Activated naive CD8-positive, alpha-beta T cell treated with anti-CD3 and anti-CD28 coated beads, Interleukin-2, amount 10 ng/mL, durations not matched to agents 7 days and 5 days (primary cell): ENCODE measurements at regions of chr1 and their contacts with region 1.

Region 1: GRCh38 chr1:217630711-217631591 is at the starts of genes GPATCH2 and SPATA17:
- DNase-seq: peak; percentile 74
- ATAC-seq: peak; percentile 94
- H3K4me3 Mint-ChIP-seq: peak within 1 kb of the TSS; percentile 92
- H3K27ac Mint-ChIP-seq: peak within 1 kb of the TSS; percentile 97
- H3K4me1 Mint-ChIP-seq: peaks cover 15% of the 10 kb centered on the region
- H3K27me3 Mint-ChIP-seq: no peaks in the 10 kb centered on the region
- total RNA-seq, gene GPATCH2: 10.0 to 11.9 TPM
- total RNA-seq, gene SPATA17: not detected

Region 2: GRCh38 chr1:217590598-217590997 is 40.4 kb before region 1 on chr1:
- POLR2A ChIA-PET with region 1: no interaction called
- DNase-seq: no peak
- ATAC-seq: no peak
- H3K4me3 Mint-ChIP-seq: no peak overlapping the region
- H3K27ac Mint-ChIP-seq: no peak overlapping the region
- H3K4me1 Mint-ChIP-seq: no peaks in the 10 kb centered on the region
- H3K27me3 Mint-ChIP-seq: no peaks in the 10 kb centered on the region

Region 3: DNA sequence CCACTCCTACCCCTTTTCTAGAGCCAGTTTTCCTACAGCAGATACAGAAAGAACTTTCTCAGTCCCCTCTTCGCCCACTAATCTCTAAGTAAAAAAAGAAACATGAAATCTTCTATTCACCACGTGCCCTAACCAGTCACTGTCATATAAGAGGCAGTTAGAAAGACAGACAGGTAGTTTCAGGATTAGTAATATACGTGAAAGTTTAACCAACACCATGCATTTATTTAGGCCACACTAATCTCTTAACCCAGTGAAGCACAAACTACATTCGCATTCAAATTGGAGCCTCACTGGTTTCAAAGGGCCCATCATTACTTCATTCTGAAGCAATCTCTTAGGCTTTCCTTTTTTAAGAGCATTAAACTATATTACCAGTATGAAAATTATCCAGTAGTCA is 10.1 kb before region 1 on chr1:
- POLR2A ChIA-PET with region 1: interaction called, 10 read pairs
- DNase-seq: no peak
- ATAC-seq: peak; percentile 56
- H3K4me3 Mint-ChIP-seq: no peak overlapping the region
- H3K27ac Mint-ChIP-seq: no peak overlapping the region
- H3K4me1 Mint-ChIP-seq: peaks cover 4% of the 10 kb centered on the region
- H3K27me3 Mint-ChIP-seq: no peaks in the 10 kb centered on the region

Region 4: DNA sequence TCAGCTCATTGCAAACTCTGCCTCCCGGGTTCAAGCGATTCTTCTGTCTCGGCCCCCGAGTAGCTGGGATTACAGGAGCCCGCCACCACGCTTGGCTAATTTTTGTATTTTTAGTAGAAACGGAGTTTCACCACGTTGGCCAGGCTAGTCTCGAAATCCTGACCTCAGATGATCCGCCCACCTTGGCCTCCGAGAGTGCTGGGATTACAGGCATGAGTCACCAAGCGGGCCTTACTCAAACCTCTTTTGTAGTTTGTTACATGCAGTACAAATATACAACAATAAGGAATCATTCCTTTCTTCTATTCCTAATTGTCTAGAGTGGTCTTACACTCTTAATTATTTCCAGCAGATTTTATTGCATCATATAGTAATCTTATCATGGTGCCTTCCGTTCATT is 16.8 kb after region 1 on chr1:
- POLR2A ChIA-PET with region 1: no interaction called
- DNase-seq: no peak
- ATAC-seq: no peak
- H3K4me3 Mint-ChIP-seq: no peak overlapping the region
- H3K27ac Mint-ChIP-seq: no peak overlapping the region
- H3K4me1 Mint-ChIP-seq: no peaks in the 10 kb centered on the region
- H3K27me3 Mint-ChIP-seq: peaks cover 4% of the 10 kb centered on the region